Thyroid gland (tissue), 4 donors: ENCODE measurements at regions of chr9 and their contacts with region 1.

Region 1: DNA sequence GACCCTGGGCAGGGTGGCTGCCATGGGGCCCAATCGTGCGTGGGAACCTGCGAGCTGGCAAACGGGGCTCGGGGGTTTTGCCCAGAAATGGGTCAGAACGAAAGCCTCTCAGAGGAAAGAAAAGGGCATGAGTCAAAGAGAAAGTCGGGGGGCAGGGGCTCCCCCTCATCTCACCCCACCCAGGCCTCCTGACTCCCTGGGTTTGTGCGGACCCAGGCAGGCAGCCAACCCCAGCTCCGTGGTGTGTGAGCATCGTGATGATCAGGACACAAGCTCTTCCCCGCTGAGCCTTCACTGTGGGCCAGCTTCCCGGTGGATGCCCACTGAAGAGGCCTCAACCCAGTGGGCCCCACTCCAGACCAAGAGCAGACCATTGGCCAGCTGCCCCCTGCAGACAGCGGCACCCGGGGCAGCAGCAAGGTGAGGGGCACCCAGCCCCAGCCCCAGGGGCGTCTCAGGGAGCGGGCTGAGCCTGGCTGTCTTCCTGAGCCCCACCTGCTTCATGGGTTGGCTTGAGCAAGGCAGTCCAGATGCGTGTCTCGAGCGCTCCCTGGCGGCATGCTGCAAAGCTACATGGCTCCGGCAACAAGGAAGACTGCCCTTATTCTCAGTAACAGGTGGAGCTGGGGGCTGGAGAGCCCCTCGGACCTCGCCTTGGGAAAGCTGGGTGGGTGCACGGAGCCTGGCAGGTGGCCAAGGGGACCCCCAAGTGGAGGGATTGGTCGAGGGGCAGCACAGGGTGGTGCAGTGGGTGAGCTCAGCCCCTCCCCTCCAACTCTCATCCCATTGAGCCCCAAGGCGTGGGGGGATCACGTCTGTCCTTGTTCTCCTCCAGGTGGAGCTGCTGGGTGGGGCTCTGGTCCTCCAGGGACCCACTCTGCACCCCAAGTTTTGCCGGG is 3.2 kb upstream of the FUT7 start:
- DNase-seq: peak; percentile 82 to 84
- H3K4me3 ChIP-seq: no peak overlapping the region
- H3K27ac ChIP-seq: peak overlapping the region in 1 of 3 donors; percentile 49
- H3K4me1 ChIP-seq: peaks cover 10 to 21% of the 10 kb centered on the region in 2 donors
- H3K27me3 ChIP-seq: no peaks in the 10 kb centered on the region
- CTCF ChIP-seq: peak; percentile 79 to 94 (median 89)
- POLR2A ChIP-seq: no peak

Region 2: DNA sequence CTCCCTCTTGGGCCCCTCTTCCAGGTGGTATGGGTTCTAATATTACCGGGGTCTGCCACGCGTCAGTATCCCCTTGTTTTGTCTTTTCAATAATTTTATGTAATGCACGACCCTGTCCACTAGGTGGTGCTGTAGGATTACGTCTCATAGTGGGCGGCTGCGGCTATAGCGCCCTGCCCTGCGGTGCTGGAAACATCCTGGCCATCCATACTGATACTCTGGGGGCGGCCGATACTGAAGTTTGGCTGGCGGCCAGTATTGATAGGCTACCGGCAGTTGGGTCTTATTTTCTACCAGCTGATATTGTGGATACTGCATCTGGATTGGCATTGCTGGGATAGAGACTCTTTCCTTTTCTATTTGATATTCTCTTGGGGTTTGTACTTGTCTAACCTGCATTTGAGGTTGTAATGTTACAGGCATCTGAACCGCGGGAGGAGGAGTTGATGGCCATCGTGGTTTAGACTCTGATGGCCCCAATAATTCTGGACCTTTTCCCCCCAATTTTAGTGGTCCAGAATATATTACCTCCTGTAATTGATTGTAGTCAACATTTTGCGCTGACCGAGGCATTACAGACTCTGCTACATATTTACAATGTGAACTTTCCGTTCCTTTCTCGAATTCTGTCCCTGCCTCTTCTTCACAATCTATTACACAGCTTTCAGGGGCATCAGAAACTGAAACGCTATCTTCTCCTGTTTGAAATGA is 247.3 kb before region 1 on chr9:
- intact Hi-C with region 1: loop called (anchors 5 kb)
- DNase-seq: peak; percentile 52 to 56
- H3K4me3 ChIP-seq: no peak overlapping the region
- H3K27ac ChIP-seq: no peak overlapping the region
- H3K4me1 ChIP-seq: peaks cover 13 to 32% of the 10 kb centered on the region in 2 donors
- H3K27me3 ChIP-seq: no peaks in the 10 kb centered on the region
- CTCF ChIP-seq: peak; percentile 65 to 86 (median 82)
- POLR2A ChIP-seq: no peak

Region 3: GRCh38 chr9:136849038-136849959 is 185.8 kb before region 1 on chr9 and contains the start of gene PHPT1:
- intact Hi-C with region 1: loop called (anchors 10 kb)
- DNase-seq: peak; percentile 99
- H3K4me3 ChIP-seq: peak within 1 kb of the TSS; percentile 54 to 79 (median 75)
- H3K27ac ChIP-seq: peak within 1 kb of the TSS; percentile 84 to 91 (median 88)
- H3K4me1 ChIP-seq: peaks cover 16 to 32% of the 10 kb centered on the region in 2 donors
- H3K27me3 ChIP-seq: no peaks in the 10 kb centered on the region
- CTCF ChIP-seq: no peak
- POLR2A ChIP-seq: peak; percentile 55 to 80
- total RNA-seq, gene PHPT1: 79.4 to 174 (median 115) TPM

Region 4: GRCh38 chr9:136949817-136950655 is 85.1 kb before region 1 on chr9:
- intact Hi-C with region 1: loop called (anchors 2 kb)
- DNase-seq: peak; percentile 99
- H3K4me3 ChIP-seq: peak overlapping the region in 2 of 3 donors; percentile 38 to 53
- H3K27ac ChIP-seq: peak overlapping the region; percentile 78 to 96 (median 95)
- H3K4me1 ChIP-seq: peaks cover 57 to 80% of the 10 kb centered on the region in 2 donors
- H3K27me3 ChIP-seq: no peaks in the 10 kb centered on the region
- CTCF ChIP-seq: peak in 4 of 6 experiments; percentile 28 to 48 (median 39)
- POLR2A ChIP-seq: peak in 1 of 2 donors; percentile 98

Region 5: DNA sequence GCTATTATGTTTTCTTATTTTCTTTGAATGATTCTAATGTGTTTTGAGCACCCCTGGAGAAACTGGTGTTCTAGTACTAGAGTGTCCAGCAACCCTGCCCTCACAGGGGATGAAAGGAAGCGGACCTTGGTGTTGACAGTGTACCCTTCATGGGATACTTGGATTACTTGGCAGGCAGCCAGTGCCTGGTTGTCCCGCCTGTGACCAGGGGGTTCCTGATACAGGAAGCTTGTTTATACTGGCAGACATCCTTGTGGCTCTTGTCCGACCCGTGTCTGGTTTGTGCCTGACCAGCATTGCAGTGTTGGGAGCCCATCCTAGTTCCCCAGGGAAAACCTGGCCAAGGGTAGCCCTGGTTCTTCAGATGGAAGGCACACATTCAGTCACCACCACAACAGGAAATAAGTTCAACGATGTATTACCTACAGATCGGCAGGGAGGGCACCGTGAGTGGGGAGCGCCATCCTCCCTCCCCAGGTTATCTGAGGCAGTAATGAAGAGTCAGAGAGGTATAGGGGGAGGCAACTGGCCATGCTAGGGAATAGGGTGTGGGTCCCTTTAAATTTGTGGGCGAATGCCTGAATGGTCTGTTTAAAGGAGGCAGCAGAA is 889.8 kb after region 1 on chr9:
- intact Hi-C with region 1: no loop called
- DNase-seq: no peak
- H3K4me3 ChIP-seq: no peak overlapping the region
- H3K27ac ChIP-seq: no peak overlapping the region
- H3K4me1 ChIP-seq: no peaks in the 10 kb centered on the region
- H3K27me3 ChIP-seq: no peaks in the 10 kb centered on the region
- CTCF ChIP-seq: no peak
- POLR2A ChIP-seq: no peak